HEK293 (cell line): ENCODE measurements at regions of chr22 and their contacts with region 1.

Region 1: DNA sequence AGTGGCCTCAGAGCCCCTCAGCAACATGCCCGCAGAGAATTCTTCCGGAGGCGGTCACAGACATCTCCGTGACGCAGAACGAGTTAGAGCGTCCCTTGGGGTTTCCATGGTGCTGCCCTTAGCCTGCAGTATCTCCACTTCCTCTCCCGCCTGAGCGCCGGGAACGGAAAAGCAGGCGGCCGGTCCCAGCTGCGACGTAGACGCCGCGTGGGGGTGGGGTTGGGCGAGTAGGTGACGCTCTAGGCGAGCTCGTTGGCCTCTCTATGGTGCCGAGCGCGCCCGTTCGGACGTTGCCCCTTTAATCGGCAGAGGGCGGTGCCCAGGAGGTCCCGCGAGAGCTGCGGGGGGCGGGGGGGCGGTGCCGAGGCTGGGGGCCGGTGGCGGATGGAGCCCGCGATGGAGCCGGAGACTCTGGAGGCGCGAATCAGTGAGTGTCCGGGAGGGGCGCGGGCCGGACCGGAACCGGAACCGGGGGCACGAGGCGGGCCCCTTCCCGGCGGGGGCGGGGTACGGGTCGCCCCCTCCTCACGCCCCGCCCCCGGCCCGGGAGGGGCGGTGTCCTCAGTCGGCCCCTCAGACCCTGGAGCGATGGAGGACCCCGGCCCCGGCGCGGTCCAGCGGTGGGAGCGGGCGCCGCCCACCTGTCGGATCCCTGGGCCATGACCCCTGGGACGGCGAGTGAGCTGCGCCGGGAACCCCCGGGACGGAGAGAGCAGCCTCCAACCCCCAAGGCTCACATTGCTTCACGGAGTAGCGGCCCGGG is at the start of gene GGA1:
- H3K4me3 ChIP-seq: peak within 1 kb of the TSS; percentile 96
- H3K27ac ChIP-seq: peak within 1 kb of the TSS; percentile 99
- H3K4me1 ChIP-seq: peaks cover 8% of the 10 kb centered on the region
- CTCF ChIP-seq: no peak; the same call in 1 of the 2 replicates

Region 2: DNA sequence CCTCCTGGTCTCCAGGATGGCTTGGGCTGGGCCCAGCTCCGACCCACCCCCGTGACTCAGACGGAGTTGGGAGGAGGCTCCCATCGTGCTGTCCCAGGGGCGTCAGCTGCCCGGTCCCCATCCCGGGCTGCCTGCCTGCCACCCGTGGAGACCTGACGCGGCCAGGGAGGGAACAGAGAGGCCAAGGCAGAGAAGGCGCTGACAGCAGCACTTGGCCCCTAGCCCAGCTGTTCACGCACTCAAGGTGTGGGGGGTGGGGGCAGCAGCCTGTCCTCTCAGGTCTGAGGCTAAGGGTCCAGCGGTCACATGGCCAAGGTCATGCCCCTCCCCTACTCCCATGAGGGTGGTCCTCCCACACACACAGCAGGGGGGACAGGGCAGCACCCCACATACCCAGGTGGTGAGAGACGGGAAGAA is 230.0 kb before region 1 on chr22:
- CTCF ChIA-PET with region 1: no interaction called
- POLR2A ChIA-PET with region 1: no interaction called
- H3K4me3 ChIP-seq: no peak overlapping the region
- H3K27ac ChIP-seq: no peak overlapping the region
- H3K4me1 ChIP-seq: no peaks in the 10 kb centered on the region
- CTCF ChIP-seq: no peak

Region 3: DNA sequence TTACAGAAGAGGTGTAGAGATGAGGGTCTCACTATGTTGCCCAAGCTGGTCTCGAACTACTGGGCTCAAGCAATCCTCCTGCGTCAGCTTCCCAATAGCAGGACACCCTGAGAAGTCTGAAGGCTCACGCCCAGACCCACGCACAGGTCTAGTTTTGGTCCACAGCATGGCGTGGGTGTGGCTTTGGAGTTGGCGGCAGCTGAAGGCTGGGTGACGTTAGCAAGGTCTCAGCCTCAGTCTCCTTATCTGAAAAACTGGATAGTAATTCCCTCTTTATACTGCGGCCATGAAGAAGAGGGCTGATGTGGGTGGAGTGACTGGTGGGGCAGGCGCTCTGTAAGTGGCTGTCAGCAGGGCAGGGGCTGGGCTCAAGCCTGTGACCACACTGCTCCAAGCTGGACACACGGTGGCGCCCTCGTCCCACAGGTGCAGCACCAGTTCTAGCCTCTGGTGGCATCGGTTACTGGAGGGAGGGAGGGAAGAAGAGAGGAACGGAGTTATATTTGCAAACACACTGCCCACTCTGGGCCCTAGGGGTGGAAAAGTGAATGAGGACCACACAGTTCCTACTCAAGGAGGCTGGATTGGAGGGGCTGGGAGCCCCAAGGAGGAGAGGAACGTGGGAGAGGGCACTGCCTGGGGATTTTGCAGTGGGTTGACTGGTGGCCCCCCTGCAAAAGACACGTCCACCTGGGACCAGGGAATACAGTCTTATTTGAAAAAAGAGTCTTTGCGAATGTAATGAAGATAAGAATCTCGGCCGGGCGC is 69.9 kb before region 1 on chr22:
- CTCF ChIA-PET with region 1: interaction called, 29 read pairs
- POLR2A ChIA-PET with region 1: interaction called, 3 read pairs
- H3K4me3 ChIP-seq: no peak overlapping the region
- H3K27ac ChIP-seq: no peak overlapping the region; the same call in 1 of the 2 replicates
- H3K4me1 ChIP-seq: peaks cover 7% of the 10 kb centered on the region
- CTCF ChIP-seq: peak; percentile 100

Region 4: GRCh38 chr22:37566903-37567820 is 41.5 kb before region 1 on chr22:
- CTCF ChIA-PET with region 1: interaction called, 33 read pairs
- POLR2A ChIA-PET with region 1: interaction called, 21 read pairs
- H3K4me3 ChIP-seq: no peak overlapping the region
- H3K27ac ChIP-seq: no peak overlapping the region
- H3K4me1 ChIP-seq: peaks cover 17% of the 10 kb centered on the region
- CTCF ChIP-seq: peak; percentile 87

Region 5: GRCh38 chr22:37594237-37594636 is 14.4 kb before region 1 on chr22:
- CTCF ChIA-PET with region 1: interaction called, 60 read pairs
- POLR2A ChIA-PET with region 1: interaction called, 35 read pairs
- H3K4me3 ChIP-seq: no peak overlapping the region
- H3K27ac ChIP-seq: no peak overlapping the region
- H3K4me1 ChIP-seq: no peaks in the 10 kb centered on the region; the same call in 1 of the 2 replicates
- CTCF ChIP-seq: no peak

Region 6: DNA sequence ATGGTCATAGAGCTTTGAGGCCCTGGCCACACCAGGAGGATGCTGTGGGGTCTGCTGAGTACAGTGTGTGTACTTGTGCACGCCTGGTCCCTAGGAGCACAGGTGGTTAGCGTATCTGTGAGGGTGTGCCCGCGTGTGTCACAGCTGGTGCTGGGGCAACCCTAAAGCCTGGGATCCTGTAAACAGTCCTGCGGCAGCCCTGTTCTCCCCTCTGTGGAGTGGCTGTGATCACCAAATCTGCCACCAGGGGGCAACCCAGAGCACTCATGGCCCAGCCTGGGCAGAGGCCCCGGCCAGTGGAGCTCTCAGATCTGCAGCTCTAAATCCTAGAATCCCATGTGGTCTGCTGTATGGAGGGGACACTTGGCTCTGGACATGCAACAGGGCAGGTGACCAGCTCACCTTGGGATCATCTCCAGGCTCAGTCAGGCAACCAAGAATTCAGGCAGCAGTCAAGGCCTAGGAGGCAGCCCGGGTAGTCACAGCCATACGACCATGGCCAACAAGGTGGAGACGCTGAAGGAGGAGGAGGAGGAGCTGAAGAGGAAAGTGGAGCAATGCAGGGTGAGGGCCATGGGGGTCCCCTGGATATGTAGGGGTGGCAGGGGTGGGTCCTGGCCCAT is 34.7 kb after region 1 on chr22:
- CTCF ChIA-PET with region 1: interaction called, 25 read pairs
- POLR2A ChIA-PET with region 1: interaction called, 8 read pairs
- H3K4me3 ChIP-seq: no peak overlapping the region
- H3K27ac ChIP-seq: no peak overlapping the region
- H3K4me1 ChIP-seq: peaks cover 8% of the 10 kb centered on the region; the same call in 1 of the 2 replicates
- CTCF ChIP-seq: peak; percentile 89

Region 7: GRCh38 chr22:37686002-37686982 is 77.6 kb after region 1 on chr22 and contains the start of gene NOL12:
- CTCF ChIA-PET with region 1: interaction called, 8 read pairs
- POLR2A ChIA-PET with region 1: interaction called, 10 read pairs
- H3K4me3 ChIP-seq: peak within 1 kb of the TSS; percentile 77
- H3K27ac ChIP-seq: peak within 1 kb of the TSS; percentile 81
- H3K4me1 ChIP-seq: peaks cover 2% of the 10 kb centered on the region; the same call in 1 of the 2 replicates
- CTCF ChIP-seq: peak; percentile 12; the same call in 1 of the 2 replicates